ENCODE measurements at regions of chr14 and their contacts with region 1.

Region 1: GRCh38 chr14:99995700-99996356 is 69.4 kb upstream of the EVL start:
- DNase-seq: peak; percentile 36
- ATAC-seq: peak; percentile 87
- H3K4me3 ChIP-seq: no peak overlapping the region
- H3K27ac ChIP-seq: no peak overlapping the region
- H3K4me1 ChIP-seq: no peaks in the 10 kb centered on the region
- H3K27me3 ChIP-seq: no peaks in the 10 kb centered on the region
- CTCF ChIP-seq: peak; percentile 79

Region 2: DNA sequence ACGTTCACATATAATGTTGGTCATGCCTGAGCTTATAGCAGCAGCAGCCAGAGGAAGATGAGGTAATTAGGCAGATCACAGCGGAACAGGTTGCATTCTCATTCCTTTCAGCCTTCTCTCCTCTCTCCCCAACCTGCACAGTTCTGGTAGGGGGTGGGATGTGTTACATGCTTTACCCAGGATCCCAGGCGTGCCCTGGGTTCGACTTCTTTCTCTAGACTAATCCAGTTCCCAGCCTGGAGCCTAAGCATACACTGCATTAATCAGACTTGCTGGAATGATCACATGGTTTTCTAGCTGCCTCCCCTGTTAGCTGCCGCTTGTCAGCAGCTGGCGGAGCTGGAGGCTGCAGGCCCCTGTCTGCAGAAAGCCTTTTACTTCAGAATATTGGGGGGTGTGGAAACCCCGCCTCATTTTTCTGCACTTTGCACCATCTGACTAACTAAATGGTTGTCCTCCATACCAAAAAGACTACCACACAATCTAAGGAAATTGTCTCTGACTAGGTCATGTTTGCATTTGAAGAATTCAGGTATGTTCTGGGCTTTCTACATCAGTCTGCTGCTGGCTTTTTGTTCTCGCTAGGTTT is 23.4 kb after region 1 on chr14:
- CTCF ChIA-PET with region 1: interaction called, 15 read pairs
- POLR2A ChIA-PET with region 1: no interaction called
- in situ Hi-C with region 1: no loop called
- intact Hi-C with region 1: no loop called
- DNase-seq: no peak
- ATAC-seq: peak; percentile 72
- H3K4me3 ChIP-seq: no peak overlapping the region
- H3K27ac ChIP-seq: peak overlapping the region; percentile 34; the same call in 1 of the 2 replicates
- H3K4me1 ChIP-seq: peaks cover 18% of the 10 kb centered on the region
- H3K27me3 ChIP-seq: no peaks in the 10 kb centered on the region
- CTCF ChIP-seq: no peak

Measured in Panc1 (cell line).